ENCODE measurements at regions of chr17 and their contacts with region 1.

Region 1: GRCh38 chr17:80008383-80008840 is 27.3 kb downstream of the TBC1D16 start:
- DNase-seq: peak; percentile 77 to 91
- ATAC-seq: peak; percentile 78 to 91
- H3K4me3 ChIP-seq: no peak overlapping the region
- H3K27ac ChIP-seq: peak overlapping the region; percentile 7 to 16; a peak in 3 of 6 replicates
- H3K4me1 ChIP-seq: peaks cover 15% of the 10 kb centered on the region
- CTCF ChIP-seq: peak; percentile 89
- EP300 ChIP-seq: no peak
- POLR2A ChIP-seq: no peak
- RAD21 ChIP-seq: peak; percentile 64 to 65

Region 2: DNA sequence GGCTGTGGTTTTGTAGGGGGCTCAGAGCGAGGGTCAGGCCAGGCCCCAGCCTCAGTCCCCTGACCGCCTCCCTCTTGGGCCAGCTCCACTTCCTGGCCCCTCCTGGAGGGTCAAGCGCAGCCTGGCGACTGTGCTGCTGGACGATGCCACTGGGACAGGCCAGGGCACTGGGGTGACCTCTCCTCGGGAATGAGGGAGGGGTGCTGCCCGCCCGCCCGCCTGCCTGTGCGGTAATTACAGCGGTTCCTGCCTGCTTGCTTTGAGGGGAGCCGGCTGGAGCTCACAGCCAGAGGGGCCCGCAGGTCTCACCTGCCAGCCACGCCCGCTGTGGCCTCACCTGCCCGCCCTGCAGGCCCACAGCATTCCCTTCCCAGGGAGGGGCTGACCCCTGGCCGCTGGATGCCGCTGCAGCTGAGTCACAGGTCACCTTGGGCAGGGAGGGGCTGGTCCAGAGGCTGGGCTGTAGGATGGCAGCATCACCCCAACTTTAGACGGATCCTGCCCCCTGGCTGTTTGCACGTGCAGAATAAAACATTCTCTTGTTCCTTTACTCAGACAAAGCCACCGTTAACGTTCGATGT is 92.5 kb before region 1 on chr17:
- CTCF ChIA-PET with region 1: interaction called, 11 read pairs
- POLR2A ChIA-PET with region 1: no interaction called
- DNase-seq: peak; percentile 77 to 82
- ATAC-seq: peak; percentile 48 to 52; a peak in 5 of 6 replicates
- H3K4me3 ChIP-seq: no peak overlapping the region
- H3K27ac ChIP-seq: peak overlapping the region; percentile 45 to 75; a peak in 5 of 6 replicates
- H3K4me1 ChIP-seq: peaks cover 35% of the 10 kb centered on the region
- CTCF ChIP-seq: peak; percentile 56
- EP300 ChIP-seq: no peak
- POLR2A ChIP-seq: no peak
- RAD21 ChIP-seq: peak; percentile 81 to 86

Region 3: DNA sequence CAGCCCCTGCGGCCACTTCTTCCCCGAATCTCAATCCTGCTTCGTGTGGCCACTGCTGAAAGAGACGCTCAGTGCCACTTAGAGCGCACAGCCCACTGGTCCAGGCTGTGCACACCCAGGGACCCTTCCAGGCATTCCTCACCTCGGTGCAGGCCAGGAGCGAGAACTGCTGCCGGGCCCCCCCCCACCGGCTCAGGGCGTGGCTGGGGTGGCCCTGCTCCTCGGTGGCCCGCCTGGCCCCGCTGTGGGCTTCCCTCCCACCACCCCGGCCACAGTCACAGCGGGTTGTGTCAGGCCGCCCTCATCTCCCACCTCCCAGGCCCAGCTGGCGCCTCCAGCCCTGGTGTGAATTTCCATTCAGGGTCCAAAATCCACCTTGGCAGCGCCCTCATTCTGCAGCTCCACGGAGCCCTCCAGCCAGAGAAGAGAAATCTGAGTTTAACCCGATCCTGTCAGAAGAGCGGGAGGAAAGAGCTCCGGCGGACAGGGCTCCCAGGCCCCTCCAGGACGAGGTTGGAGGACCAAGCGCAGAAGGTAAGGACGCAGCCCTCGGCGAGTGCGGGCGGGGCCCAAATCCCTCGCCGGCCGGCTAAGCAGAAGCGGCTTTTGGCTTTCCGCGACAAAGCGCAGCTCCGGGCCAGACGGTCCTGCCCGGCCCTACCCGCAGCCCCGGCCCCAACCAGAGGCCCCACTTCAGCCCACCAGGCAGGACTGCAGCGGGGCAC is 15.2 kb after region 1 on chr17:
- CTCF ChIA-PET with region 1: interaction called, 138 read pairs
- POLR2A ChIA-PET with region 1: no interaction called
- DNase-seq: no peak
- ATAC-seq: peak; percentile 14 to 34; a peak in 3 of 6 replicates
- H3K4me3 ChIP-seq: no peak overlapping the region
- H3K27ac ChIP-seq: no peak overlapping the region
- H3K4me1 ChIP-seq: peaks cover 18% of the 10 kb centered on the region
- CTCF ChIP-seq: no peak
- EP300 ChIP-seq: no peak
- POLR2A ChIP-seq: no peak
- RAD21 ChIP-seq: no peak

Region 4: DNA sequence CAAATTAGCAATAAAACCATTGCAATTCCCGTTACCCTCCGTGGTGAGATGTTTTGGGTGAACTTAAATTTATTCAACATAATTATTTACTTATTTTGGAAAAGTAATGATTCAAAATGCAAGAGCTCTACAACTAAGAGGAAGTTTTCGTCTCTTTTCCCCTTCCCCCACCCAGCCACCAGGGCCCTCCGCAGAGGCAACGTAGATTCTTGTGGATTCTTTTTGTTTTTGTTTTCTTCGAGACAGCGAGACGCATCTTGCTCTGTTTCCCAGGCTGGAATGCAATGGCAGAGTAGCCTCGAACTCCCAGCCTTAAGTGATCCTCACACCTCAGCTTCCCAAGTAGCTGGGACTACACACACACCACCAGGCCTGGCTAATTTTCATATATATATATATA is 47.2 kb after region 1 on chr17:
- CTCF ChIA-PET with region 1: interaction called, 12 read pairs
- POLR2A ChIA-PET with region 1: no interaction called
- DNase-seq: no peak
- ATAC-seq: no peak
- H3K4me3 ChIP-seq: no peak overlapping the region
- H3K27ac ChIP-seq: no peak overlapping the region
- H3K4me1 ChIP-seq: no peaks in the 10 kb centered on the region
- CTCF ChIP-seq: no peak
- EP300 ChIP-seq: no peak
- POLR2A ChIP-seq: no peak
- RAD21 ChIP-seq: no peak

Region 5: DNA sequence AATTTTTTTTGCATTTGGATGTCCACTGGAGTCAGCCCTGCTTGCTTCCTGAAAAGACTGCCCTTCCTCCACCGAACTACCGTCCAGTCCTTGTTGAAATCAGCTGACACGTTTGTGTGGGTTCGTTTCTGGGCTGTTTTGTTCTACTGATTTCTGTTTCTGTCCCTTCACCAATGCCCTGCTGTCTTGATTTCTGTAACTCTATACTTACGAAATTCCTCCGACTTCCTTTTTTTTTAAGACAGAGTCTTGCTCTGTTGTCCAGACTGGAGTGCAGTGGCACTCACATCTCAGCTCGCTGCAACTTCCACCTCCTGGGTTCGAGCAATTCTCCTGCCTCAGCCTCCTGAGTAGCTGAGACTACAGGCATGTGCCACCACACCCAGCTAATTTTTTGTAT is 84.5 kb after region 1 on chr17:
- CTCF ChIA-PET with region 1: interaction called, 12 read pairs
- POLR2A ChIA-PET with region 1: no interaction called
- DNase-seq: no peak
- ATAC-seq: no peak
- H3K4me3 ChIP-seq: no peak overlapping the region
- H3K27ac ChIP-seq: no peak overlapping the region
- H3K4me1 ChIP-seq: no peaks in the 10 kb centered on the region
- CTCF ChIP-seq: no peak
- EP300 ChIP-seq: no peak
- POLR2A ChIP-seq: no peak
- RAD21 ChIP-seq: no peak